Naive thymus-derived CD4-positive, alpha-beta T cell (primary cell): ENCODE measurements at regions of chr4 and their contacts with region 1.

Region 1: DNA sequence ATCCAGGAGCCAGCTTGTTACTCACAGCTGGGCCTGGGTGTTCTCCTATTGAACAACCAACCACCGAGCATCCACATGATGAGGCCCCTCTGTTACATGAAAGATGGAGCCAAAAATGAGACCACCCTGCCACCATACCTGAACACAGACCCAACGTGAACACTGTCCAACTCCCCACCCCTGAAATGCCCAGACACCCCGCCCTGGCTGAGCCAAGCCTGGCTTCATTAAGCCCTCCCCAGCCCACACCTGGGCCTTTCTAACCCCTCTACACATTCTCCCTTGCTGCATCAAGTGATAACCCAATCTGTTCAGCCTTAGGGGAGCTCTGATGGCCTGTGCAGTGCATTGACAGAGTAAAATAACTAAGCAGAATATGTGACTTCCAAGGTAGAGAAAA is 80.7 kb downstream of the EVC start:
- DNase-seq: no peak
- ATAC-seq: no peak
- H3K4me3 ChIP-seq: no peak overlapping the region
- H3K4me3 Mint-ChIP-seq: no peak overlapping the region
- H3K27ac ChIP-seq: no peak overlapping the region
- H3K27ac Mint-ChIP-seq: no peak overlapping the region
- H3K4me1 ChIP-seq: no peaks in the 10 kb centered on the region
- H3K4me1 Mint-ChIP-seq: no peaks in the 10 kb centered on the region
- H3K27me3 ChIP-seq: no peaks in the 10 kb centered on the region
- H3K27me3 Mint-ChIP-seq: peaks cover 0 to 5% (median 0%) of the 10 kb centered on the region in 5 donors

Region 2: DNA sequence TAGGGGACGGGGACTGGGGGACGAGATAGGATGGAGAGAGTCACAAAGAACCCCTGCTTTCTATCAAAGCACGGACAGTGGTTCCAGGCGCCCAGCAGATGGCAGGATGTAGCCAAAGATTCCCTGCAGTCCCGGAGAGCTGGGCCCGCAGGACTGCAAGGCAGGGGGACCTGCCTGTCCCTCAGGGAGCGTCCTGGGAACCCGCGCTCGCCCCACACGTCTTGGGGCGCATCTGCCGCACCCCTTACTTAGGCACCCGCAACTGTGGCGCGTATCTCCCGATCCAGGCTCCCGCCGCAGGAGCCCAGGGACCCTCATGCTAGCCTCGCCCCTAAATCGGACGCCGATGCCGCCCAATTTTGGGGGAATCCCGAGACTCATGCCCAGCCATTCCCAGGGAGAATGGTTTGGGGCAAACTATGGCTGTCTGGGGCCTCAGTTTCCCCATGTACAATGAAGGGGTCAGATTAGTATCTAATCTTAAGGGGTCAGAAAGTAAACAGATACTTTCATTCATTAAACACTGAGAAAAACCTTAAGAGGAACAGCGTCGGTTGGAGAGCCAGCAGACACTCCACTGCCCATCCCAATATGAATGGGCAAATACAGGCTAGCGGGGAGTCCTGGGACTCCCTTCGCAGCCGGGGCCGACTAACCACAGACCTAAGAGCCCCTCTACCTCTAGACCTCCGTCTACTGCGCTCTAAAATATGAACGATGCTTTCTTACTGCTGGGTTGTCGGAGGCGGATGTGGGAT is 741.0 kb before region 1 on chr4:
- CTCF ChIA-PET with region 1: no interaction called
- POLR2A ChIA-PET with region 1: no interaction called
- intact Hi-C with region 1: loop called in 1 of 2 experiments (anchors 5 kb)
- DNase-seq: peak in 4 of 9 donors; percentile 4 to 25 (median 16)
- ATAC-seq: peak; percentile 59
- H3K4me3 ChIP-seq: peak overlapping the region; percentile 27
- H3K4me3 Mint-ChIP-seq: peak overlapping the region; percentile 39 to 86 (median 76)
- H3K27ac ChIP-seq: no peak overlapping the region
- H3K27ac Mint-ChIP-seq: no peak overlapping the region
- H3K4me1 ChIP-seq: peaks cover 0 to 5% of the 10 kb centered on the region in 2 donors
- H3K4me1 Mint-ChIP-seq: peaks cover 0 to 21% (median 14%) of the 10 kb centered on the region in 7 donors
- H3K27me3 ChIP-seq: no peaks in the 10 kb centered on the region
- H3K27me3 Mint-ChIP-seq: peaks cover 52 to 69% (median 55%) of the 10 kb centered on the region in 5 donors

Region 3: GRCh38 chr4:5863461-5864113 is 71.9 kb after region 1 on chr4:
- CTCF ChIA-PET with region 1: no interaction called
- POLR2A ChIA-PET with region 1: no interaction called
- intact Hi-C with region 1: no loop called
- DNase-seq: peak in 1 of 9 donors; percentile 58
- ATAC-seq: no peak
- H3K4me3 ChIP-seq: no peak overlapping the region
- H3K4me3 Mint-ChIP-seq: peak overlapping the region in 1 of 10 donors; percentile 49
- H3K27ac ChIP-seq: no peak overlapping the region
- H3K27ac Mint-ChIP-seq: peak overlapping the region in 1 of 9 donors; percentile 58
- H3K4me1 ChIP-seq: peaks cover 4 to 5% of the 10 kb centered on the region in 2 donors
- H3K4me1 Mint-ChIP-seq: peaks cover 4 to 39% (median 15%) of the 10 kb centered on the region in 7 donors
- H3K27me3 ChIP-seq: no peaks in the 10 kb centered on the region
- H3K27me3 Mint-ChIP-seq: peaks cover 0 to 16% (median 9%) of the 10 kb centered on the region in 5 donors

Region 4: GRCh38 chr4:5952975-5953951 is 161.6 kb after region 1 on chr4:
- CTCF ChIA-PET with region 1: no interaction called
- POLR2A ChIA-PET with region 1: no interaction called
- intact Hi-C with region 1: no loop called
- DNase-seq: no peak
- ATAC-seq: no peak
- H3K4me3 ChIP-seq: no peak overlapping the region
- H3K4me3 Mint-ChIP-seq: no peak overlapping the region
- H3K27ac ChIP-seq: no peak overlapping the region
- H3K27ac Mint-ChIP-seq: no peak overlapping the region
- H3K4me1 ChIP-seq: no peaks in the 10 kb centered on the region
- H3K4me1 Mint-ChIP-seq: peaks cover 0 to 8% (median 0%) of the 10 kb centered on the region in 7 donors
- H3K27me3 ChIP-seq: no peaks in the 10 kb centered on the region
- H3K27me3 Mint-ChIP-seq: peaks cover 0 to 13% (median 4%) of the 10 kb centered on the region in 5 donors